ENCODE measurements at regions of chr10 and their contacts with region 1.

Region 1: GRCh38 chr10:77099136-77099535 is 538.5 kb downstream of the KCNMA1 start:
- DNase-seq: no peak
- ATAC-seq: no peak
- H3K4me3 ChIP-seq: no peak overlapping the region
- H3K27ac ChIP-seq: no peak overlapping the region
- H3K4me1 ChIP-seq: no peaks in the 10 kb centered on the region
- CTCF ChIP-seq: no peak
- EP300 ChIP-seq: no peak
- POLR2A ChIP-seq: no peak
- RAD21 ChIP-seq: no peak

Region 2: GRCh38 chr10:77109470-77109994 is 10.4 kb after region 1 on chr10:
- CTCF ChIA-PET with region 1: interaction called, 10 read pairs
- POLR2A ChIA-PET with region 1: no interaction called
- DNase-seq: no peak
- ATAC-seq: no peak
- H3K4me3 ChIP-seq: no peak overlapping the region
- H3K27ac ChIP-seq: no peak overlapping the region
- H3K4me1 ChIP-seq: peaks cover 10% of the 10 kb centered on the region
- CTCF ChIP-seq: no peak
- EP300 ChIP-seq: no peak
- POLR2A ChIP-seq: no peak
- RAD21 ChIP-seq: no peak